HEK293 (cell line): ENCODE measurements at regions of chr1 and their contacts with region 1.

Region 1: DNA sequence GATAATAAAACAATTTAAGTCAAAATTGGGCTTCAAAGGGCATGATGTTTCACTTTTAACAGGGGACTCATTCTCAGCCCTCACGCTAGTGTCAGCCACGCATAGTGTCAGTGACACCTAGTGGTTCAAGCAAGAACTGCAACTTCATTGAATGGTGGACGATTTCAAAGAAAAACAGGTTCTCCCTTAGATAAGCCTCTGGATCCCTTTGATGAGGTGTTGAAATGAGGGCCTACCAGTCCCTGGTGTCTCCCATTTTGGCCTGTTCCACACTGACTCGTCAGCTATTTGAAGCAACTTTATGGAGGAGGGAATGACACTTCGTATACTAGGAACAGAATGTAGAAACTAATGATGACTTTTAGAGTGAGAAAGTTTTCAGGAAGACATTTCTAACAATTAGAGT is 56.2 kb downstream of the FCRL5 start:
- H3K4me3 ChIP-seq: no peak overlapping the region
- H3K27ac ChIP-seq: no peak overlapping the region
- H3K4me1 ChIP-seq: no peaks in the 10 kb centered on the region
- CTCF ChIP-seq: peak; percentile 25; the same call in 1 of the 2 replicates

Region 2: DNA sequence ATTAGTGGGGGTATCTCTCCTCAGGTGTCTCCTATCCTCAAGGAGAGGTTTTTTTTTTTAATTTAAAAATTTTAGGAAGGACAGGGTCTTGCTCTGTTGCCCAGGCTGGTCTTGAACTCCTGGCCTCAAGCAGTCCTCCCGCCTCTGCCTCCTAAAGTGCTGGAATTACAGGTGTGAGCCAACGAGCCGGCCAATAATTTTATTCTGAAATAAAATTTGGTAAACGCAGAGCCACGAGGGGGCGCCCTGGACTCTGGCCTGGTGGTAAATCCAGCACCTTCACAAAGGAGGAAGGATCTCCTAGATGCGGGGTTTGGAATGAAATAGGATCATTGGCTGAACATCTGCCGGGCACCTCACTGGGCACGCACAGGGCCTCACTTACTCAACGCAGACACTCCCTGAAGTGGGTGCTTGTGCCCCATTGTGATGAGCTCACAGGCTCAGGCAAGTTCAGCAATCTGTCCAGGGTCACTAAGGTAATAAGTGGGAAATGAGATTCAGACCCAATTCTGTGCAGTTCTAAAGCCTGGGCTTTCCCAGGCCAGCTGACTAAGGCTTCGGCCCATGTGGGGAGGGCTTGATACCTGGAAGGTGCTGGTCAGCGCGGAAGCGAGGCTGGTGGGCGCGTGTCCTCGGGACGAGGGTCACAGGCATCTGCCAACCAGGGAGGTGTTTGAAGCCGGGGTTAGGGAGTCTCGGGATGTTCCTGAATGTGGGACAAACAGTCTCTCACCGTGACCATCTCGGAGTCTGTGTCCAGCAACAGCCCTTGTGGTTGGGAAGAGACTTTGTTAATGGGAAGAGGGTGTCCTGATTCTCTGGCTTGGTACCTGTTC is 325.2 kb before region 1 on chr1:
- CTCF ChIA-PET with region 1: interaction called, 14 read pairs
- POLR2A ChIA-PET with region 1: no interaction called
- H3K4me3 ChIP-seq: no peak overlapping the region
- H3K27ac ChIP-seq: no peak overlapping the region
- H3K4me1 ChIP-seq: no peaks in the 10 kb centered on the region
- CTCF ChIP-seq: no peak; the same call in 1 of the 2 replicates

Region 3: GRCh38 chr1:157198619-157199420 is 297.3 kb before region 1 on chr1:
- CTCF ChIA-PET with region 1: interaction called, 16 read pairs
- POLR2A ChIA-PET with region 1: no interaction called
- H3K4me3 ChIP-seq: no peak overlapping the region
- H3K27ac ChIP-seq: no peak overlapping the region
- H3K4me1 ChIP-seq: no peaks in the 10 kb centered on the region
- CTCF ChIP-seq: no peak

Region 4: DNA sequence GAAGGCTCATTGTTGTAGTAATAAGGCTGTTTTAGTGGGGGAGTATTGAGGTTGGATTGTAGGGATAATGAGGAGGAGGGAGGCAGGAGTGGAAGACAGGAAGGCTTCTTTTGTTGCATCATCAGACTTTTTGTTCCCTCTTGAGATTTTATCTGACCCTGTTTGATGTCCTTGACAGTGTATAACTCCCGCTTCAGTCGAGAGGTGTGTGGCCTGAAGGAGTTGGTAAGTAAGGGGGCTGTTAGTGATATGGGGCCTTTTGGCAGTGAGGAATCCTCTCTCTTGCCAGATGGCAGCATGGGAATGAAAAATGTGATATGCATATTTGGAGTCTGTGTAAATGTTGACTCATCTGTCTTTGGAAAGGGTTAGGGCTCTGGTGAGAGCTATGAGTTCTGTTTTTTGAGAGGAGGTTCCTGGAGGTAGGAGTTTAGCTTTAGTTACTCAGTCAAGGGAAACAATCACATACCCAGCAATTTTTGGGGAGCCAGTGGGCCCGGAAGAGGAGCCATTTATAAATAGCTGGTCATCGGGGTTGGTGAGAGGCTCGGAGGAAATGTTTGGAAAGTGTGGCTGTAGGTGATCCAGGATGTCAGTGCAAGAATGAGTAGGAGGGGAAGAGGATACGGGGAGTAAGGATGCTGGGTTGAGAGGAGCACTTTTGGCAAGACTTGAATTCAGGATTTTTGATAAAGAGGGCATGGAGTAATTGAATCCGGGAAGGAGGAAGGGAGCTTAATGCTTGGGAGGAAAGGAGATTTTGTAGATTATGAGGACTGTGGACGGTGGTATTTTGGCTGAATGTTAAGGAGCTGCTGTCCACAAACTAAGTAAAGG is 221.2 kb before region 1 on chr1:
- CTCF ChIA-PET with region 1: no interaction called
- POLR2A ChIA-PET with region 1: no interaction called
- H3K4me3 ChIP-seq: no peak overlapping the region
- H3K27ac ChIP-seq: no peak overlapping the region
- H3K4me1 ChIP-seq: peaks cover 11% of the 10 kb centered on the region
- CTCF ChIP-seq: no peak

Region 5: GRCh38 chr1:157482717-157483116 is 13.4 kb before region 1 on chr1:
- CTCF ChIA-PET with region 1: interaction called, 14 read pairs
- POLR2A ChIA-PET with region 1: no interaction called
- H3K4me3 ChIP-seq: no peak overlapping the region
- H3K27ac ChIP-seq: no peak overlapping the region
- H3K4me1 ChIP-seq: no peaks in the 10 kb centered on the region
- CTCF ChIP-seq: no peak

Region 6: GRCh38 chr1:158028969-158029368 is 532.8 kb after region 1 on chr1:
- CTCF ChIA-PET with region 1: no interaction called
- POLR2A ChIA-PET with region 1: no interaction called
- H3K4me3 ChIP-seq: no peak overlapping the region
- H3K27ac ChIP-seq: no peak overlapping the region
- H3K4me1 ChIP-seq: no peaks in the 10 kb centered on the region
- CTCF ChIP-seq: no peak